Right ventricle myocardium inferior (tissue), 1 donor: ENCODE measurements at regions of chr10 and their contacts with region 1.

Region 1: GRCh38 chr10:102503281-102504220 is at the start of gene SUFU:
- DNase-seq: peak; percentile 97
- ATAC-seq: peak; percentile 85
- total RNA-seq, gene SUFU: 7.8 TPM

Region 2: GRCh38 chr10:102399217-102400089 is 104.1 kb before region 1 on chr10:
- intact Hi-C with region 1: loop called (anchors 5 kb)
- DNase-seq: peak; percentile 97
- ATAC-seq: peak; percentile 79

Region 3: GRCh38 chr10:102420810-102421644 is 82.5 kb before region 1 on chr10 and contains the start of gene FBXL15:
- intact Hi-C with region 1: no loop called
- DNase-seq: peak; percentile 98
- ATAC-seq: peak; percentile 93
- total RNA-seq, gene FBXL15: 8.4 TPM

Region 4: GRCh38 chr10:102461187-102462054 is 42.1 kb before region 1 on chr10:
- intact Hi-C with region 1: loop called (anchors 5 kb)
- DNase-seq: peak; percentile 97
- ATAC-seq: peak; percentile 97

Region 5: DNA sequence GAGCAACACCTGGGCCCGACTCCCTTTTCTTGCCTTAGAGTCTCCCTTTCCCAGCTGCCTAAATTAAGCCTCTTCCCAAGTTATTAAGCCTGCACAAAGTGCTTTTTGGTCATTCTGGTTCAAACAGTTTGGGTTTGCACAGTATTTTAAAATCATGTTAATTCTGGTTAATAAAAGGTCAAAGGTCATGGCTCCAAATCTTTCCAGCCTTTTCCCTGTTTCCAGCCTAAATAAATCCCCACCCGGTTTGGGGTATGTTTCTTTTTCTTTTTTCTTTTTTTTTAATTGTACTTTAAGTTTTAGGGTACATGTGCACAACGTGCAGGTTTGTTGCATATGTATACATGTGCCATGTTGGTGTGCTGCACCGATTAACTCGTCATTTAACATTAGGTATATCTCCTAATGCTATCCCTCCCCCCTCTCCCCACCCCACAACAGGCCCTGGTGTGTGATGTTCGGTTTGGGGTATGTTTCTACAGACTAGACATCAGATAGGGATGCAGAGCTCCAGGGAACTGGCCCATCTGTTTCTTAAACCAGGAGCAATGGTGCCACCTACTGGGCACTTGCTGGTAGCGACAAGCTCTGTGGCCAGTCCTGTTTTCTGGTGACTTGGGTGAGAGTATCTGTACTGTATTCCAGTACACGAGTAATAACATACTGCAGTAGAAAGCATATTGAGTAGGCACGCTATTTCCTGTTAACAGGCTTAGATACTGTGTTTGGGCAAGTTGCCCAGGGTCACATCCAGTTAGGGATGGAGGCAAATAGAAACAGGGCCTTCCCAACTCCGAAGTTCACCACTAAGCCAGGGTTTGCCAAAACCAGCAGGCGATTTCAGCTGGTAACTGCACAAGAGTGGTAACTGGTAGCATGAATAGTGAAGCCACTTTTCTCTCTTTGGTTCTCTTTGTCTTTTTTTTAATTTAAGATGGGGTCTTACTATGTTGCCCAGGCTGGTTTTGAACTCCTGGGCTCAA is 80.2 kb after region 1 on chr10:
- intact Hi-C with region 1: loop called (anchors 2 kb)
- DNase-seq: peak; percentile 89
- ATAC-seq: peak; percentile 90

Region 6: DNA sequence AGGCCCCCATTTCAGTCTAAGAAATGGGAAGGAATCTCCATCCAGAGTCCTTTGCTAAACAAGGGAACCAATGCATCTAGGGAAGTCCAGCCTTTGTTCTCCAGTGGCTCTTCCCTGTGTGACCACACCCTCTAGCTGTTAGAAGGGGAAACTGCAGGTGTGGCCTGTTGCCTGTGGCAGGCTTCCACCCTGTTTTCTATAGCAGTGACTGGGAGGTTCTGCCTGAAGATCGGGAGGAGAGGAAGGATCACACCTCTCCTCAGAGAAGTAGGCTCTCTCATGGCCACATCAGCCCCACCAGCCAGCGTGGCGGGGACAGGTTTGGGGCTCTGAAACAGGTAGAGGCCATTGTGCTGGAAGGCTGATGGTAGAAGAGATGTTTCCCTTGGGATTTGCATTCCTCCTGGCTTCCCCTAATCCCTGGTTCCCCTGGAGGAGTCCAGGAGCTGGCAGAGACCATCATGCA is 93.0 kb after region 1 on chr10:
- intact Hi-C with region 1: loop called (anchors 5 kb)
- DNase-seq: no peak
- ATAC-seq: peak; percentile 43